Activated CD8-positive, alpha-beta T cell treated with anti-CD3 and anti-CD28 coated beads for 36 hours (primary cell): ENCODE measurements at regions of chr13 and their contacts with region 1.

Region 1: GRCh38 chr13:77599351-77599750 is 63.8 kb downstream of the SCEL start:
- DNase-seq: no peak
- ATAC-seq: no peak
- H3K4me3 Mint-ChIP-seq: no peak overlapping the region
- H3K27ac Mint-ChIP-seq: no peak overlapping the region
- H3K4me1 Mint-ChIP-seq: no peaks in the 10 kb centered on the region
- H3K27me3 Mint-ChIP-seq: peaks cover 8% of the 10 kb centered on the region
- CTCF ChIP-seq: no peak

Region 2: DNA sequence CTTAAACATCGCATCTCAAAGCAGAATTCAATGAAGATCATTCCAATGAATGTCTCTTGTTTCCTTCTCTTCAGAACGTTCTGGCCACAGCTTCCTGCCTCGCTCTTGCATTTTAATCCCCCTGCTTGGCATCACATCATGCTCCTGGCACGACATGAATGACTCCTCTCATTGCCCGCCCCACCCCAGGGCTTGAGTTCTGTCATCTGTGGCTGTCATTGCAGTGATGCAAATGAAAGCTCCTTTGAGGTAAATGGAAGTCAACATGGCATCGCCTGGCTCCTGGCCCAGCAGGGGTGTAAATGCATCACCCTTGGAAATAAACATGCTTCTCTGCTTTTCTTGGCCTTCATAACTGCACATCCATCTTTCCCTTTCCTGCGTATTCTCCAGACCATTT is 15.2 kb before region 1 on chr13:
- CTCF ChIA-PET with region 1: interaction called, 11 read pairs
- POLR2A ChIA-PET with region 1: no interaction called
- intact Hi-C with region 1: no loop called
- DNase-seq: no peak
- ATAC-seq: no peak
- H3K4me3 Mint-ChIP-seq: no peak overlapping the region
- H3K27ac Mint-ChIP-seq: no peak overlapping the region
- H3K4me1 Mint-ChIP-seq: no peaks in the 10 kb centered on the region
- H3K27me3 Mint-ChIP-seq: no peaks in the 10 kb centered on the region
- CTCF ChIP-seq: no peak

Region 3: GRCh38 chr13:77751513-77752456 is 152.4 kb after region 1 on chr13:
- CTCF ChIA-PET with region 1: interaction called, 106 read pairs
- POLR2A ChIA-PET with region 1: no interaction called
- intact Hi-C with region 1: no loop called
- DNase-seq: peak; percentile 70
- ATAC-seq: peak; percentile 92
- H3K4me3 Mint-ChIP-seq: peak overlapping the region; percentile 40
- H3K27ac Mint-ChIP-seq: peak overlapping the region; percentile 66
- H3K4me1 Mint-ChIP-seq: peaks cover 18% of the 10 kb centered on the region
- H3K27me3 Mint-ChIP-seq: no peaks in the 10 kb centered on the region
- CTCF ChIP-seq: peak; percentile 85